Left cardiac atrium (tissue), 4 donors: ENCODE measurements at regions of chr10 and their contacts with region 1.

Region 1: GRCh38 chr10:62769574-62770242 is 34.8 kb upstream of the ADO start:
- DNase-seq: no peak
- ATAC-seq: peak; percentile 66 to 73

Region 2: DNA sequence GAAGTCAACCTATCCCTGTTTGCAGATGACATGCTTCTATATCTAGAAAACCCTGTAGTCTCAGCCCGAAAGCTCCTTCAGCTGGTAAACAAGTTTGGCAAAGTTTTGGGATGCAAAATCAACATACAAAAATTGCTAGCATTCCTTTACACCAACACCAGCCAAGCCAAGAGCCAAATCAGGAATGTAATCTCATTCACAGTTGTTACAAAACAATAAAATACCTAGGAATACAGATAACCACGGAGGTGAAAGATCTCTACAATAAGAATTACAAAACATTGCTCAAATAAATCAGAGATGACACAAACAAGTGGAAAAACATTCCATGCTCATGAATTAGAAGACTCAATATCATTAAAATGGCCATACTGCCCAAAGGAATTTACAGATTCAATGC is 446.0 kb before region 1 on chr10:
- intact Hi-C with region 1: no loop called
- DNase-seq: no peak
- ATAC-seq: no peak

Region 3: GRCh38 chr10:62804356-62805230 is 34.9 kb after region 1 on chr10 and contains the start of gene ADO:
- intact Hi-C with region 1: loop called in 1 of 2 experiments (anchors 5 kb)
- DNase-seq: peak; percentile 90
- ATAC-seq: peak; percentile 94 to 95
- total RNA-seq, gene ADO: 20.9 to 23.6 TPM